Esophagus muscularis mucosa (tissue), 4 donors: ENCODE measurements at regions of chr5 and their contacts with region 1.

Region 1: GRCh38 chr5:127766676-127767340 is 63.6 kb downstream of the CCDC192 start:
- DNase-seq: no peak
- H3K4me3 ChIP-seq: no peak overlapping the region
- H3K27ac ChIP-seq: peak overlapping the region in 1 of 4 donors; percentile 7
- H3K4me1 ChIP-seq: peaks cover 10 to 14% (median 13%) of the 10 kb centered on the region in 4 donors
- H3K27me3 ChIP-seq: no peaks in the 10 kb centered on the region
- CTCF ChIP-seq: no peak
- EP300 ChIP-seq: no peak
- POLR2A ChIP-seq: no peak

Region 2: GRCh38 chr5:127885176-127885575 is 118.4 kb after region 1 on chr5:
- intact Hi-C with region 1: loop called (anchors 10 kb)
- DNase-seq: no peak
- H3K4me3 ChIP-seq: no peak overlapping the region
- H3K27ac ChIP-seq: no peak overlapping the region
- H3K4me1 ChIP-seq: peaks cover 0 to 13% (median 8%) of the 10 kb centered on the region in 4 donors
- H3K27me3 ChIP-seq: no peaks in the 10 kb centered on the region
- CTCF ChIP-seq: no peak
- EP300 ChIP-seq: no peak
- POLR2A ChIP-seq: no peak